Panc1 (cell line): ENCODE measurements at regions of chr17 and their contacts with region 1.

Region 1: DNA sequence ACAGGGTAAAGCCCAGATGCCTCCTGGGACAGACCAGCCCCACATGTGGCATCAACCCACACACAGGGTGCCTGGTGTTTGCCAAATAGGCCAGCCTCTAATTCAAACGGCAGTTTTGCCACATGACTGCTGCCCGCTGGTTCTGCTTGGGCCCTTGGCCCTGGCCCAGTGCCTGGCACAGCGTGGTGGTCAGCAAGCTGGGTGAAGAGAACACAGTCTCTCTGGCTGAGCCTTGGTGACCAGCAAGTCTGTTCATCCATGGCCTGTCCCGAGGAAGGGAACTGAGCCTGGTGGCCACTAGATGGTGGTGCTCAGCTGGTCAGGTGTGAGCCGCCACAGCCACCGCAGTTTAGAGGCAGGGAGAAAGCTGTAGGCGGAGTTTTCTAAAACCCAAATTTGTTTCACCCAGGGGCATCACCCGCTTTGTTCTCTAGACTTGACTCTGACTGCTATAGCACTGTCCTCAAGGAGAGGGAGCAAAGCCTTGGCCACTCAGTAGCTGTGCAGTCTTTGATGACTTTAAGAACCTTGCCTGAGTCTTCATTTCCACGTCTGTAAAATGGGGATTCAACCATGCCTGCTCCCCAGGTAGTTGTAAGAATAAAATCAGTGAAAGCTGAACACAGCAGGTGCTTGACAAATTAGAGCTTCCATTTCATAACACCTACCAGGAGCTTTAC is 4.7 kb upstream of the GFAP start:
- DNase-seq: no peak
- ATAC-seq: peak; percentile 93
- H3K4me3 ChIP-seq: no peak overlapping the region
- H3K27ac ChIP-seq: no peak overlapping the region
- H3K4me1 ChIP-seq: no peaks in the 10 kb centered on the region
- H3K27me3 ChIP-seq: no peaks in the 10 kb centered on the region
- CTCF ChIP-seq: peak; percentile 85

Region 2: GRCh38 chr17:44887971-44888954 is 31.8 kb before region 1 on chr17:
- CTCF ChIA-PET with region 1: interaction called, 11 read pairs
- POLR2A ChIA-PET with region 1: no interaction called
- in situ Hi-C with region 1: no loop called
- intact Hi-C with region 1: no loop called
- DNase-seq: no peak
- ATAC-seq: no peak
- H3K4me3 ChIP-seq: no peak overlapping the region
- H3K27ac ChIP-seq: no peak overlapping the region
- H3K4me1 ChIP-seq: no peaks in the 10 kb centered on the region
- H3K27me3 ChIP-seq: no peaks in the 10 kb centered on the region
- CTCF ChIP-seq: no peak

Region 3: GRCh38 chr17:44941712-44942331 is 21.8 kb after region 1 on chr17:
- CTCF ChIA-PET with region 1: no interaction called
- POLR2A ChIA-PET with region 1: no interaction called
- in situ Hi-C with region 1: no loop called
- intact Hi-C with region 1: no loop called
- DNase-seq: no peak
- ATAC-seq: 0 out of 2 replicates have a peak, but pooled peaks have one; percentile 39
- H3K4me3 ChIP-seq: no peak overlapping the region
- H3K27ac ChIP-seq: peak overlapping the region; percentile 39; the same call in 1 of the 2 replicates
- H3K4me1 ChIP-seq: peaks cover 12% of the 10 kb centered on the region
- H3K27me3 ChIP-seq: no peaks in the 10 kb centered on the region
- CTCF ChIP-seq: no peak

Region 4: DNA sequence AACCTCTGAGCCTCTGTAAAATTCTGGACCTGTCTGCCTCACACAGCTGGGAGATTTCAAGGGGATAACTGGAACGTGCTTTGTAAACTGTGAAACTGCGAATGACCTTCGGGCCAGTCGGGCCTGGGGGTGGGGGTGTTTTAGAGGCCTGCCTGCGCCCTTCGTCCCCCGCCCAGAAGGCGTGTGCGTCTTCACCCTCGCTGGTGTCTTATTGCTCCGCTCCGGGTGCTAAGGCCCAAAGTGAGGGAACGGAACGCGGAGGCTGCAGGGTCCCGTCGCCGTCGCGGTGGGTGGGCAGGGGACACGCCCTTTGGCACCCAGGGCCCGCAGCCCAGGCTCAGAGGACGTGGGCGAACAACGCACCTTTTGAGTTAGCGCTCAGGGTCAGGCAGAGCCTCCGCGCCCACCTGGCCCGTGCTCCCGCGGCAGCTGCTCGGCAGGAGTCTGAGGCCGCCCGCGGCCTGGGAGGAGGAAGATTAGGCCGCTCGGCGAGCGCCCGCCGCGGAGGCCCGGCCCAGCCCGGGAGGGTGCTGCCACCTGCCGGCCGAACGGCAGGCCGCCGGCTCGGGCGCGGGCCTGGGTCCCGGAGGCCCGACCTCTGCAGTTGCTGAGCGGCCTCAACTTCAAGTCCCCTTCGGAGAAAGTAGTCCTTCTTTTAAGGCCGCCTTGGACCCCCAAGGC is 101.7 kb after region 1 on chr17:
- CTCF ChIA-PET with region 1: interaction called, 15 read pairs
- POLR2A ChIA-PET with region 1: no interaction called
- in situ Hi-C with region 1: no loop called
- intact Hi-C with region 1: loop called (anchors 1 kb)
- DNase-seq: no peak
- ATAC-seq: peak; percentile 82
- H3K4me3 ChIP-seq: peak overlapping the region; percentile 21 to 48
- H3K27ac ChIP-seq: peak overlapping the region; percentile 17; the same call in 1 of the 2 replicates
- H3K4me1 ChIP-seq: peaks cover 19% of the 10 kb centered on the region
- H3K27me3 ChIP-seq: no peaks in the 10 kb centered on the region
- CTCF ChIP-seq: peak; percentile 95